Activated naive CD8-positive, alpha-beta T cell treated with anti-CD3 and anti-CD28 coated beads, Interleukin-2, amount 10 ng/mL, durations not matched to agents 7 days and 5 days (primary cell): ENCODE measurements at regions of chr1 and their contacts with region 1.

Region 1: GRCh38 chr1:165630629-165631341 is at the start of gene MGST3:
- DNase-seq: peak; percentile 95
- ATAC-seq: peak; percentile 91
- H3K4me3 Mint-ChIP-seq: no peak within 1 kb of the TSS
- H3K27ac Mint-ChIP-seq: peak within 1 kb of the TSS; percentile 65
- H3K4me1 Mint-ChIP-seq: peaks cover 11% of the 10 kb centered on the region
- H3K27me3 Mint-ChIP-seq: peaks cover 2% of the 10 kb centered on the region
- total RNA-seq, gene MGST3: 61.1 to 62.3 TPM

Region 2: DNA sequence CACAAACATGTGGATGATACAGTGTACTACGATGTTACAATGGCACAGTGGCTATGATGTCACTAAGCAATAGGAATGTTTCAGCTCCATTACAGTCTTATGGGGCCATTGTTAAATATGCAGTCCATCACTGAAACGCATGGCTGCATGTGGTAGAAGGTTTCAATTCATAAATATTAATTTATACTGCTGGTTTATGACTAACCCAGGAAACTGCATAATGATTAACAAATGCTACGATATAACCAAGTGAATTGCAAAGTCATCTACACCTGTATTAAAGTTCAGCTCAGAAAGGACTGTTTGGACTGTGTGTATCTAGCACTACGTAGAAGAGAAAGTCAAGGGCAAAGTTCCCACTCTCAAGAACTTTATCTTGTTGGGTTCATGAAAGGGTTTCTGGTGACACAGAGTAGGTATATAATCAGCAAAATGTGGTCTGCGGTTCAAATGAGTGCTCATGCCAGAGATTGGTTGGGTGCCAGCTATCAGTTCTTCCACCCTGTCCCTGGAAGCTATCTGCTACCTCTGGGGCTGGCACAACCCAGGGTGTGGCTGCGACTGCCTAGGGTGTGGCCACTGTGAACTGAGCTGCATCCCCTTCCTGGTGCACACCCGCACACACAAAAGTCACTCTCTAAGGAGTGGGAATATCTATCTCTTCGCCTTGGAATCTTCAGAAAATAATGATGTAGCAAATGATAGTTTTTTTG is 15.0 kb after region 1 on chr1:
- POLR2A ChIA-PET with region 1: no interaction called
- DNase-seq: no peak
- ATAC-seq: no peak
- H3K4me3 Mint-ChIP-seq: no peak overlapping the region
- H3K27ac Mint-ChIP-seq: no peak overlapping the region
- H3K4me1 Mint-ChIP-seq: peaks cover 10% of the 10 kb centered on the region
- H3K27me3 Mint-ChIP-seq: peaks cover 2% of the 10 kb centered on the region

Region 3: GRCh38 chr1:165686121-165686970 is 55.6 kb after region 1 on chr1:
- POLR2A ChIA-PET with region 1: no interaction called
- DNase-seq: no peak
- ATAC-seq: no peak
- H3K4me3 Mint-ChIP-seq: no peak overlapping the region
- H3K27ac Mint-ChIP-seq: no peak overlapping the region
- H3K4me1 Mint-ChIP-seq: peaks cover 22% of the 10 kb centered on the region
- H3K27me3 Mint-ChIP-seq: no peaks in the 10 kb centered on the region

Region 4: GRCh38 chr1:165697881-165698760 is 67.3 kb after region 1 on chr1 and contains the start of gene ALDH9A1:
- POLR2A ChIA-PET with region 1: interaction called, 11 read pairs
- DNase-seq: peak; percentile 92
- ATAC-seq: peak; percentile 92
- H3K4me3 Mint-ChIP-seq: peak within 1 kb of the TSS; percentile 100
- H3K27ac Mint-ChIP-seq: peak within 1 kb of the TSS; percentile 98
- H3K4me1 Mint-ChIP-seq: peaks cover 16% of the 10 kb centered on the region
- H3K27me3 Mint-ChIP-seq: peaks cover 2% of the 10 kb centered on the region
- total RNA-seq, gene ALDH9A1: 37.7 to 43.8 TPM